Naive thymus-derived CD4-positive, alpha-beta T cell (primary cell): ENCODE measurements at regions of chr3 and their contacts with region 1.

Region 1: GRCh38 chr3:9302425-9303181 is 53.2 kb upstream of the SRGAP3 start:
- DNase-seq: peak; percentile 59 to 82 (median 76)
- ATAC-seq: peak; percentile 96
- H3K4me3 ChIP-seq: peak overlapping the region; percentile 55
- H3K4me3 Mint-ChIP-seq: peak overlapping the region in 8 of 10 donors; percentile 35 to 71 (median 47)
- H3K27ac ChIP-seq: no peak overlapping the region
- H3K27ac Mint-ChIP-seq: peak overlapping the region in 1 of 9 donors; percentile 12
- H3K4me1 ChIP-seq: peaks cover 4 to 5% of the 10 kb centered on the region in 2 donors
- H3K4me1 Mint-ChIP-seq: peaks cover 0 to 12% (median 7%) of the 10 kb centered on the region in 7 donors
- H3K27me3 ChIP-seq: no peaks in the 10 kb centered on the region
- H3K27me3 Mint-ChIP-seq: peaks cover 0 to 6% (median 3%) of the 10 kb centered on the region in 5 donors

Region 2: DNA sequence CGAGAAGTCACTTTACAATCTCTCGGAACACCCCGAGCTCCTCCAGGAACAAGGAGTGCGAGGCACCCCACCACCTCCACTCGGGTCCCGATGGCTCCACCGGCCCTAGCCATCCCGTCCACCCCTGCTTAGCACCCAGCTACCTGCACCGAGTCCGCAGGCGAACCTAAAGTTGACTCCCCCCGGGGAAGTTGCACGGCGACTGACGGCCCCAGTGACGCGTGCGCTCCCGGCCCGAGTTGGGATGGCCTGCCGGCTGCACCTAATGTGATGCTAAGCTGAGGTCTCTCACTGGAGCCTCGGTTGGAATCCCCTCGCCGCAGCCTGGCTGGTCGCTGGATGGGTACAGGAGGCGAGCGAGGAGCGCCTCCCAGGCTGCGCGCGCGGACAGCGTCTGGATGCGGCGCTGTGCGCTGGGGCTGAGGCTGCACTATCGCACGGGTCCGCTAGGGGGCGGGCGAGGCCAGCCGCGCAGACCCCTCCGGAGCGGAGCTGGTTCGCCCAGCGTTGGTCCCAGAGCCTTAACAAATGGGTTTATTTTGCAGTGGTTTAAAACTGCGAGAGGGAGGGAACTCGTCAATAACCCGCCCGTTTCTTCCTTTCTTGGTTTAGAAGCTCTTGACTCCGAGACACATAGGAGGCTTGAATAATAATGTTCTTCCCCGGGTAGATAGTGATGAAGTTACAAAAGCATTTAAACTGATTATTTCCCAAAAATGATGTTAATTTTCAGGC is 533.3 kb before region 1 on chr3 and contains the start of gene OXTR:
- CTCF ChIA-PET with region 1: no interaction called
- POLR2A ChIA-PET with region 1: no interaction called
- intact Hi-C with region 1: loop called in 1 of 2 experiments (anchors 5 kb)
- DNase-seq: peak in 7 of 9 donors; percentile 14 to 76 (median 37)
- ATAC-seq: peak; percentile 78
- H3K4me3 ChIP-seq: no peak within 1 kb of the TSS
- H3K4me3 Mint-ChIP-seq: peak within 1 kb of the TSS in 9 of 10 donors; percentile 19 to 71 (median 60)
- H3K27ac ChIP-seq: no peak within 1 kb of the TSS
- H3K27ac Mint-ChIP-seq: peak within 1 kb of the TSS in 1 of 9 donors; percentile 19
- H3K4me1 ChIP-seq: peaks cover 0 to 6% of the 10 kb centered on the region in 2 donors
- H3K4me1 Mint-ChIP-seq: peaks cover 9 to 19% (median 15%) of the 10 kb centered on the region in 7 donors
- H3K27me3 ChIP-seq: peaks cover 0 to 8% of the 10 kb centered on the region in 2 donors
- H3K27me3 Mint-ChIP-seq: peaks cover 27 to 47% (median 30%) of the 10 kb centered on the region in 5 donors
- total RNA-seq, gene OXTR: 0.05 to 1.3 (median 0.22) TPM

Region 3: DNA sequence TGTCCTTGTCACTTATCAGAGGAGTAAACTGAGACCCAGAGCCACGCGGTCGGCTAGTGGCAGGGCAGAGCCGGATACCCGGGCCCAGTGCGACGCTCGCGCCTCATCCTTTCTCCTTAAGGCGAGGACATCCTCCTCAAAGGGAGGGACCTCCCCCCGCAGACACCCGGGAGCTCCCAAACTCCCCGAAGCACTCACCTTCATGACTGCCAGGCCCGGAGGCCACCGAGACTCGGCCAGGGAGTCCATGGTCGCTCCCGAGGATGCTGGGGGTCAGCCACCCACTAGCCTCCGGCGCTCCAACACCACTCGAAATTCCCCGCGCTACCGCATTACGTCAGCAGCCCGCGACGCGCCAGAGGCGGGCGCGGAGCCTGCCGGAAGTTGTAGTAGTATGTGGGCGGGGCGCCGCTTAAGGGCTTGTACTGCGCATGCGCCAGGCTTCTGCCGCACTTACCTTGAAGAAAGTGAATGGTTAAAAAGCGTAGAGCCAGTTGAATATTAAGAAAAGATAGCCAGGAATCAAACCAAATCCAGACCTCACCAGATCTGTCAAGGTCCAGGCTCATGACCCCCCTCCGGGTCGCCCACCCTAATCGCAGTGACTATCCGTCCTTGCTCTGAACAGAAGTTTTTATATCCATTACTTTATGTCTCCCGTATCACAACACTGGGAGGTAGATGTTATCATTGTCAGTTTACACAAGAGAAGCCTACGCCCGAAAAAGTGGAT is 339.3 kb before region 1 on chr3 and contains the start of gene RAD18:
- CTCF ChIA-PET with region 1: interaction called, 95 read pairs
- POLR2A ChIA-PET with region 1: no interaction called
- intact Hi-C with region 1: loop called in 1 of 2 experiments (anchors 2 kb)
- DNase-seq: peak; percentile 87 to 95 (median 92)
- ATAC-seq: peak; percentile 97
- H3K4me3 ChIP-seq: peak within 1 kb of the TSS; percentile 80
- H3K4me3 Mint-ChIP-seq: peak within 1 kb of the TSS; percentile 85 to 99 (median 96)
- H3K27ac ChIP-seq: peak within 1 kb of the TSS; percentile 94
- H3K27ac Mint-ChIP-seq: peak within 1 kb of the TSS; percentile 94 to 99 (median 97)
- H3K4me1 ChIP-seq: peaks cover 6 to 10% of the 10 kb centered on the region in 2 donors
- H3K4me1 Mint-ChIP-seq: peaks cover 7 to 45% (median 38%) of the 10 kb centered on the region in 7 donors
- H3K27me3 ChIP-seq: no peaks in the 10 kb centered on the region
- H3K27me3 Mint-ChIP-seq: peaks cover 0 to 8% (median 4%) of the 10 kb centered on the region in 5 donors
- total RNA-seq, gene RAD18: 9.3 to 36.4 (median 18.2) TPM

Region 4: DNA sequence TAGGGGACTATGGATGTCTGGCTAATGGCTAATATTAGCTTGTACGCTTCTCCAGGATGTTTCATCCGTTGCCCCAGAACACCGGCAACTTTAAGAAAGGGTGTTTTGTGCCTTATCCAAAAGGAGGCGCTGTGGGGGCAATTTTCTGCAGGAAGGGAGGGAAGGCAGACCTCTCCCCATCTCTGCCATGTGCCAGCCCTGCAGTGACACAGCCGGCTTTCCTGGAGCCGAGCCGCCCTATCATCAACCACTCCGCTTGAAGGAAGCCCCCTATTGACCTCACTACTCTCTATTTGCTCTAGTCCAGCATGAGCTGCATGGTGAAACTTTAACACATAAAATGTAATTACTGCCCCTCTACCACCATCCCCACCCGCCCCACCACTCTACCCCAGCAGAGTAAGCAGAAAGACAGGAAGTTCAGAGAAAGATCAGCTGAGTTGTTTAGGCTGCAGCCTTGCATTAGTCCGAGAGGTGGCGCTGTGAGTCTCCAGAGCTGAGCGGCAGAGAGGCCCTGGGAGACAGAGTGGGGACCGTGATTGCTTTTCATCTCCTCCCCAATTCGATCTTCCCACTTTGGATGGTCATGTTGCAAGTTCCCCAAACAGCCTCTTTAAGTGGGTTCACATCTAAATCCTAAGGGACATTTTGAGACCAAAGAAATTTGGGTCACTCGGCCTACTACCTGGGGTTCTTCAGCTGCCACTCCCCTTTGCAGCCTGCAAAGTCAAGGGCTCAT is 314.8 kb before region 1 on chr3:
- CTCF ChIA-PET with region 1: interaction called, 19 read pairs
- POLR2A ChIA-PET with region 1: no interaction called
- intact Hi-C with region 1: loop called (anchors 1 kb)
- DNase-seq: peak; percentile 29 to 66 (median 53)
- ATAC-seq: peak; percentile 88
- H3K4me3 ChIP-seq: no peak overlapping the region
- H3K4me3 Mint-ChIP-seq: peak overlapping the region in 9 of 10 donors; percentile 43 to 75 (median 66)
- H3K27ac ChIP-seq: no peak overlapping the region
- H3K27ac Mint-ChIP-seq: peak overlapping the region in 2 of 9 donors; percentile 5 to 84
- H3K4me1 ChIP-seq: no peaks in the 10 kb centered on the region
- H3K4me1 Mint-ChIP-seq: peaks cover 0 to 7% (median 5%) of the 10 kb centered on the region in 7 donors
- H3K27me3 ChIP-seq: no peaks in the 10 kb centered on the region
- H3K27me3 Mint-ChIP-seq: no peaks in the 10 kb centered on the region

Region 5: GRCh38 chr3:9224490-9224889 is 78.1 kb before region 1 on chr3:
- CTCF ChIA-PET with region 1: no interaction called
- POLR2A ChIA-PET with region 1: no interaction called
- intact Hi-C with region 1: loop called in 1 of 2 experiments (anchors 2 kb)
- DNase-seq: no peak
- ATAC-seq: peak; percentile 35
- H3K4me3 ChIP-seq: no peak overlapping the region
- H3K4me3 Mint-ChIP-seq: peak overlapping the region in 1 of 10 donors; percentile 39
- H3K27ac ChIP-seq: no peak overlapping the region
- H3K27ac Mint-ChIP-seq: no peak overlapping the region
- H3K4me1 ChIP-seq: no peaks in the 10 kb centered on the region
- H3K4me1 Mint-ChIP-seq: peaks cover 0 to 40% (median 0%) of the 10 kb centered on the region in 7 donors
- H3K27me3 ChIP-seq: no peaks in the 10 kb centered on the region
- H3K27me3 Mint-ChIP-seq: peaks cover 0 to 3% (median 0%) of the 10 kb centered on the region in 5 donors

Region 6: DNA sequence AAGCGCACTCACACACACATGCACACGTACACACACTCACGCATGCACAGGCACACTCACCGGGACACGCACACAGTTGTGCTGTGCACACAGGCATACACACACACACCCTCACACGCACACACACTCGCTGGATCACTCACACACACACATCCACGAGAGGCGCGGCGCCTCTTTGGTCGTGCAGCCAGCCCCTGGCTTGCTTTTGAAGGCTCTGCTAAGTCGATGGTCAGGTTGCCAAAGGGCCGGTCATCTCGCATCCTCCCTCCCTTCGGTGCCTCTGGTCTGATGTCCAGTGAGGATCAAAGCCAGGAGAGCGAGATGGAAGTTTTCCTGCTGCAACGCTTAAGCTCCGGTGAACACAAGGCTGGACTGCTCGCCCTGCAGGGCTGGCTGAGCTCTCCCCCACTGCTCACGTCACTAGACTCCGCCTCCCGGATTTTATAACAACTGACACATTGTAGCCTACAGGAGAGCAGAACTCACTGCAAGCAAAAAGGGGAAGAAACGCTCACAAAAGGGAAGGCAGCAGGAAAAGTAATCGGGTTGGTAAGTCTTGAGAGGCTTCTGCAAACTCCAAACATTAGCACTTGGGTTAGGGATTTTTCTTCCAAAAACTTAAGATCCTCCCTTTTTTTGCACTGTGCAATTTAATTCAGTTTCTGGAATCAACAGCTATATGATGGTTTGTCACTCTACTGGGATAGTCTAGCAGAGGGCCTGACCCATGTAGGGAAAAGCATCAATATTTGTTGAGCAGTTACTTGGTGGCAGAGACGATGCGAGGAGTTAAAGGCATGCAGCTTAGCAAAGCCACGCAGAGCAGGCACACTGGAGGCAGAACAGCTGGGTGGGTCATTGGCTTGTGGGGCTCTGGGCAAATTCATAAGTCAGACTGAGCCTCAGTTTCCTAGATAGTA is 53.1 kb before region 1 on chr3 and contains the start of gene SRGAP3:
- CTCF ChIA-PET with region 1: interaction called, 5 read pairs
- POLR2A ChIA-PET with region 1: no interaction called
- intact Hi-C with region 1: loop called in 1 of 2 experiments (anchors 1 kb)
- DNase-seq: peak; percentile 45 to 85 (median 80)
- ATAC-seq: peak; percentile 99
- H3K4me3 ChIP-seq: peak within 1 kb of the TSS; percentile 91
- H3K4me3 Mint-ChIP-seq: peak within 1 kb of the TSS; percentile 82 to 99 (median 92)
- H3K27ac ChIP-seq: peak within 1 kb of the TSS; percentile 60
- H3K27ac Mint-ChIP-seq: peak within 1 kb of the TSS; percentile 3 to 89 (median 78)
- H3K4me1 ChIP-seq: peaks cover 0 to 6% of the 10 kb centered on the region in 2 donors
- H3K4me1 Mint-ChIP-seq: peaks cover 9 to 43% (median 28%) of the 10 kb centered on the region in 7 donors
- H3K27me3 ChIP-seq: no peaks in the 10 kb centered on the region
- H3K27me3 Mint-ChIP-seq: peaks cover 0 to 29% (median 4%) of the 10 kb centered on the region in 5 donors
- total RNA-seq, gene SRGAP3: 1.4 to 6.0 (median 4.8) TPM